MCF 10A (cell line): ENCODE measurements at regions of chr10 and their contacts with region 1.

Region 1: GRCh38 chr10:29946953-29947700 is 112.3 kb downstream of the JCAD start:
- DNase-seq: peak; percentile 95
- H3K4me3 Mint-ChIP-seq: peak overlapping the region; percentile 61
- H3K27ac Mint-ChIP-seq: peak overlapping the region; percentile 99
- H3K4me1 Mint-ChIP-seq: peaks cover 80% of the 10 kb centered on the region
- H3K27me3 Mint-ChIP-seq: no peaks in the 10 kb centered on the region
- CTCF ChIP-seq: no peak

Region 2: GRCh38 chr10:29635711-29636144 is 311.4 kb before region 1 on chr10:
- CTCF ChIA-PET with region 1: no interaction called
- POLR2A ChIA-PET with region 1: interaction called, 21 read pairs
- intact Hi-C with region 1: no loop called
- DNase-seq: no peak
- H3K4me3 Mint-ChIP-seq: peak overlapping the region; percentile 78
- H3K27ac Mint-ChIP-seq: peak overlapping the region; percentile 96
- H3K4me1 Mint-ChIP-seq: peaks cover 45% of the 10 kb centered on the region
- H3K27me3 Mint-ChIP-seq: no peaks in the 10 kb centered on the region
- CTCF ChIP-seq: no peak

Region 3: GRCh38 chr10:29811751-29812449 is 135.2 kb before region 1 on chr10:
- CTCF ChIA-PET with region 1: no interaction called
- POLR2A ChIA-PET with region 1: interaction called, 11 read pairs
- intact Hi-C with region 1: no loop called
- DNase-seq: peak; percentile 85
- H3K4me3 Mint-ChIP-seq: no peak overlapping the region
- H3K27ac Mint-ChIP-seq: peak overlapping the region; percentile 83
- H3K4me1 Mint-ChIP-seq: peaks cover 36% of the 10 kb centered on the region
- H3K27me3 Mint-ChIP-seq: no peaks in the 10 kb centered on the region
- CTCF ChIP-seq: no peak

Region 4: DNA sequence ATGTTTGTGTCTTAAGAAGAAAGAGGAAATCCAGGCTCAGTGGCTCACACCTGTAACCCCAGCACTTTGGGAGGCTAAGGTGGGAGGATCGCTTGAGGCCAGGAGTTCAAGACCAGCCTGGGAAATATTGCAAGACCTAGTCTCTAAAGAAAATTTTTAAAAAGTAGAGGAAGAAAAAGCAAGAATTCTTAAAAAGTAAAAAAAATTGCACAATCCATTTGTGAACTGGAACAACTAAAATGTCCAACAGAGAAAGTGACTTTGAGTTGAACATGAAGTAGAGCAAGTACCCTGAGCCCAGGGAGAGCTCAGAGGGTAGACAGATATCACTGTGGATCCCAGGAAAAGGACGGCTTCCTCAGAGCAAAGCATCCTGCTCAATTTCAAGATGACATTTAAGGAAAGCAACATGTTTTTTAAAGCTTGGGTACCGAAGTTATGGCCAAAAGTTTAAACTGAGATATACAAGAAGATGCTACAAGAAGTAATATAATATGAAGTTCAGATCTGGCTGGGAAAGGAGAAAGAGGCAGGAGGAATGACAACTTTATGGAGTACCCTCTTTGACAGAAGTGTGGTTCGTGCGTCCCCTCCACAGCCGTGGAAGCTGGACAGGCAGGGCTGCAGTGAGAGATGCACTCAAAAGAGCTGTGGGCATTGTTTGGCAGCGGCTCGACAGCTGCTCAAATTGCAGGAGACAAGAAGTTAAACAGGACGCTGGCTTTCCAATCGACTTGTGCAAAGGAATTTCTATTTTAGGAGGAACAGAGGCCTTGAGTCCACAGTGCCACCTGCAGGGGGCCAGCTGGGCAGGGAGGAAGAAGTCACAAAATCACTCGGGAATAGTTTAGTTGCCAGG is 89.1 kb before region 1 on chr10:
- CTCF ChIA-PET with region 1: interaction called, 6 read pairs
- POLR2A ChIA-PET with region 1: interaction called, 52 read pairs
- intact Hi-C with region 1: loop called (anchors 1 kb)
- DNase-seq: peak; percentile 83
- H3K4me3 Mint-ChIP-seq: no peak overlapping the region
- H3K27ac Mint-ChIP-seq: peak overlapping the region; percentile 3
- H3K4me1 Mint-ChIP-seq: peaks cover 38% of the 10 kb centered on the region
- H3K27me3 Mint-ChIP-seq: no peaks in the 10 kb centered on the region
- CTCF ChIP-seq: peak; percentile 68

Region 5: GRCh38 chr10:29977171-29977570 is 30.0 kb after region 1 on chr10:
- CTCF ChIA-PET with region 1: interaction called, 4 read pairs
- POLR2A ChIA-PET with region 1: interaction called, 22 read pairs
- intact Hi-C with region 1: no loop called
- DNase-seq: no peak
- H3K4me3 Mint-ChIP-seq: no peak overlapping the region
- H3K27ac Mint-ChIP-seq: no peak overlapping the region
- H3K4me1 Mint-ChIP-seq: peaks cover 15% of the 10 kb centered on the region
- H3K27me3 Mint-ChIP-seq: no peaks in the 10 kb centered on the region
- CTCF ChIP-seq: no peak